ENCODE measurements at regions of chr16 and their contacts with region 1.

Region 1: GRCh38 chr16:3059000-3059722 is 6.3 kb upstream of the IL32 start:
- DNase-seq: peak; percentile 76 to 90 (median 85)
- H3K4me3 ChIP-seq: peak overlapping the region; percentile 23 to 89
- H3K4me3 Mint-ChIP-seq: peak overlapping the region; percentile 90 to 95 (median 94)
- H3K27ac ChIP-seq: peak overlapping the region; percentile 89
- H3K27ac Mint-ChIP-seq: peak overlapping the region; percentile 89 to 95 (median 92)
- H3K4me1 ChIP-seq: peaks cover 79% of the 10 kb centered on the region
- H3K4me1 Mint-ChIP-seq: peaks cover 36 to 74% (median 58%) of the 10 kb centered on the region in 4 donors
- H3K27me3 ChIP-seq: no peaks in the 10 kb centered on the region
- H3K27me3 Mint-ChIP-seq: no peaks in the 10 kb centered on the region

Region 2: DNA sequence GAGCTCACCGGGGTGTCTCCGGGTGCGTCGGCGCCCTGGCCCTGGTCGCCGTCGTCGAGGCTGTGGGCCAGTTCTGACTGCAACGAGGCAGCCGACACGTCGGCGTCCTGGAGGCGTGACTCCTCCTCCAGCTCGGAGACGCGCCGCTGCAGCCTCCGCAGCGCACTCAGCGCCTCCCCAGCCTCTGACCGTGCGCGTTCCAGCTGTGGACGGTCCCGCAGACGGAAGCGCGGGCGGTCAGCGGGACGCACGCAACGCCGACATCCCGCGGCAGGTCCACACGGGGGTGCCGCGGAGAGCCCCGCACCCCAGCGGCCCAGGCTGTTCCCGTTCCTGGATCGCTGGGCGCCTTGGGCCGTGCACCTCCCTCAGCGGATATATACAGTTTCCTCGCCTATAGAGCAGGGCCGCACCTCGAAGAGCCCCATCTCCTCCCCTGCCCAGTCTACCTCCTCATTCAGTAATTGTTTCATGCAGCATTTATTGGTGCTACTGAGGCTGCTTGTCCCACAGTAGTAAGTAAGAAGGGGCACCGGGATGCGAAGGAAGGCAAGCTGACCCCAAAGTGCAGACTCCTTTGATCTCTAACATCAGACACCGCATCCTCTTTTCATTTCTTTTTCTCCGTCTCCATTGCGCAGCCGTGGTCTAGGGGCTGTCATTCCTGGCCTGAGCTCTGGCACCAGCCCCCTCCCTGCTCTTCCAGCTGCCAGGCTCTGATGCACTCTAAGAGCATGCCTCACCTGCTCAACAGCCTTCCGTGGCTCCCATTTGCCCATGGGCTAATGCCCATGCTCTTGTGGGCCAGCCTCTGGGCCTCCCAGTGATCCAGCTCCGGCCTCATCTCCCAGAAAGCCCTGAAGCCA is 29.4 kb before region 1 on chr16:
- CTCF ChIA-PET with region 1: interaction called, 44 read pairs
- POLR2A ChIA-PET with region 1: interaction called, 37 read pairs
- intact Hi-C with region 1: loop called (anchors 1 kb)
- DNase-seq: peak in 3 of 5 donors; percentile 36 to 43 (median 37)
- H3K4me3 ChIP-seq: peak overlapping the region in 1 of 2 donors; percentile 41
- H3K4me3 Mint-ChIP-seq: peak overlapping the region; percentile 52 to 88 (median 74)
- H3K27ac ChIP-seq: no peak overlapping the region
- H3K27ac Mint-ChIP-seq: peak overlapping the region in 1 of 7 donors; percentile 81
- H3K4me1 ChIP-seq: peaks cover 25% of the 10 kb centered on the region
- H3K4me1 Mint-ChIP-seq: peaks cover 11 to 32% (median 19%) of the 10 kb centered on the region in 4 donors
- H3K27me3 ChIP-seq: peaks cover 13% of the 10 kb centered on the region
- H3K27me3 Mint-ChIP-seq: peaks cover 22 to 25% of the 10 kb centered on the region in 2 donors

Region 3: GRCh38 chr16:3080024-3080423 is 20.9 kb after region 1 on chr16:
- CTCF ChIA-PET with region 1: interaction called, 57 read pairs
- POLR2A ChIA-PET with region 1: interaction called, 217 read pairs
- intact Hi-C with region 1: loop called (anchors 2 kb)
- DNase-seq: no peak
- H3K4me3 ChIP-seq: no peak overlapping the region
- H3K4me3 Mint-ChIP-seq: peak overlapping the region in 5 of 8 donors; percentile 2 to 49 (median 38)
- H3K27ac ChIP-seq: no peak overlapping the region
- H3K27ac Mint-ChIP-seq: peak overlapping the region; percentile 64 to 93 (median 91)
- H3K4me1 ChIP-seq: peaks cover 65% of the 10 kb centered on the region
- H3K4me1 Mint-ChIP-seq: peaks cover 49 to 94% (median 70%) of the 10 kb centered on the region in 4 donors
- H3K27me3 ChIP-seq: no peaks in the 10 kb centered on the region
- H3K27me3 Mint-ChIP-seq: no peaks in the 10 kb centered on the region

Region 4: GRCh38 chr16:3099732-3100499 is 40.8 kb after region 1 on chr16:
- CTCF ChIA-PET with region 1: interaction called, 249 read pairs
- POLR2A ChIA-PET with region 1: interaction called, 36 read pairs
- intact Hi-C with region 1: loop called (anchors 1 kb)
- DNase-seq: peak; percentile 80 to 89 (median 82)
- H3K4me3 ChIP-seq: peak overlapping the region; percentile 19 to 23
- H3K4me3 Mint-ChIP-seq: peak overlapping the region; percentile 77 to 90 (median 86)
- H3K27ac ChIP-seq: peak overlapping the region; percentile 33
- H3K27ac Mint-ChIP-seq: peak overlapping the region; percentile 82 to 97 (median 93)
- H3K4me1 ChIP-seq: peaks cover 58% of the 10 kb centered on the region
- H3K4me1 Mint-ChIP-seq: peaks cover 19 to 68% (median 44%) of the 10 kb centered on the region in 4 donors
- H3K27me3 ChIP-seq: no peaks in the 10 kb centered on the region
- H3K27me3 Mint-ChIP-seq: no peaks in the 10 kb centered on the region

Region 5: DNA sequence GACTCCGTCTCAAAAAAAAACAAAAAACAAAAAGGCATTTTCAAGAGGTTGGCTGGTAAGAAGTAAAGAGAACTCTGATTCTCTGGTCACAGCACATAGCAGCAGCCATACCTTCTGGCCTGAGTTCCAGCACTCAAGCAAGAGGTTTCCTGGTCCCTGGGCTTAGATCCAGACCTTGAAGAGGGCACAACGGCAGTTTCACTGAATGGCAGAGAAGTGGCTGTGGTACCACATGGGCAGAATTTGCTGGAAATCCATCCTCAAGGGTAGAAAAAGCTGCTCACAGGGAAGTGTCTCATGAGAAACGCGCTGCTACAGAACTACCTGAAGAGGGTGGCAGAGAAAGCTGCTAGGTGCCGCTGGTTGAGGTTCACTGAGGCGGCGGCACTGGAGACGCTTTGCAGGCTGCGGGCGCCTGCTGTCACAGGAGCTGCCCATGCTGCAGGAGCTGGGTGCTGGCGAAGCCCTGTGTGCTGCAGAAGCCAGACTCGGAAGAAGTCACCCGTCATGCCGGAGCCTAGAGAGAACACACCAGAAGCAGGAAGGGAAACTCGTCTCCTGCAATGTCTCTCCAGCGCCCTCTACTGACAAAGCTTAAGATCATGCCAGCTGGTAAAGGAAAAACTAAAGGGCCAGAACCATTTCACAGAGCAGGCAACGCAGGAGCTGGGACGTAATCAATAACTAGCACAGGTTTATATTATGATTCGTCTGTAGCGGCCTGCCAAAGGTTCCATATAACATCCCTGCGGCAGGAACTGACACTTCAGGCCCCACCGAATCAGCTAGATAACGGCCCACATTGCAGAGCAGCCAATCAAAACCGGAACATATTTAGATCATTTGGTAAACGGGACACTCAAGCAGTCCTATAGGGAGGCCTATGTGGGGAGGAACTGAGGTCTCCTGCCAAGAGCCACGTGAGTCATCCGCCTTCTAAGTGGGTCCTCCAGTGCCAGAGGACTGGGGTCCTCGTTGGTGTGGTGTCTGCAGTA is 70.3 kb after region 1 on chr16:
- CTCF ChIA-PET with region 1: interaction called, 362 read pairs
- POLR2A ChIA-PET with region 1: interaction called, 129 read pairs
- intact Hi-C with region 1: loop called (anchors 1 kb)
- DNase-seq: peak; percentile 89 to 92 (median 90)
- H3K4me3 ChIP-seq: peak overlapping the region; percentile 56 to 64
- H3K4me3 Mint-ChIP-seq: peak overlapping the region; percentile 88 to 95 (median 94)
- H3K27ac ChIP-seq: peak overlapping the region; percentile 46
- H3K27ac Mint-ChIP-seq: peak overlapping the region; percentile 83 to 96 (median 89)
- H3K4me1 ChIP-seq: peaks cover 52% of the 10 kb centered on the region
- H3K4me1 Mint-ChIP-seq: peaks cover 26 to 70% (median 42%) of the 10 kb centered on the region in 4 donors
- H3K27me3 ChIP-seq: no peaks in the 10 kb centered on the region
- H3K27me3 Mint-ChIP-seq: no peaks in the 10 kb centered on the region

Region 6: DNA sequence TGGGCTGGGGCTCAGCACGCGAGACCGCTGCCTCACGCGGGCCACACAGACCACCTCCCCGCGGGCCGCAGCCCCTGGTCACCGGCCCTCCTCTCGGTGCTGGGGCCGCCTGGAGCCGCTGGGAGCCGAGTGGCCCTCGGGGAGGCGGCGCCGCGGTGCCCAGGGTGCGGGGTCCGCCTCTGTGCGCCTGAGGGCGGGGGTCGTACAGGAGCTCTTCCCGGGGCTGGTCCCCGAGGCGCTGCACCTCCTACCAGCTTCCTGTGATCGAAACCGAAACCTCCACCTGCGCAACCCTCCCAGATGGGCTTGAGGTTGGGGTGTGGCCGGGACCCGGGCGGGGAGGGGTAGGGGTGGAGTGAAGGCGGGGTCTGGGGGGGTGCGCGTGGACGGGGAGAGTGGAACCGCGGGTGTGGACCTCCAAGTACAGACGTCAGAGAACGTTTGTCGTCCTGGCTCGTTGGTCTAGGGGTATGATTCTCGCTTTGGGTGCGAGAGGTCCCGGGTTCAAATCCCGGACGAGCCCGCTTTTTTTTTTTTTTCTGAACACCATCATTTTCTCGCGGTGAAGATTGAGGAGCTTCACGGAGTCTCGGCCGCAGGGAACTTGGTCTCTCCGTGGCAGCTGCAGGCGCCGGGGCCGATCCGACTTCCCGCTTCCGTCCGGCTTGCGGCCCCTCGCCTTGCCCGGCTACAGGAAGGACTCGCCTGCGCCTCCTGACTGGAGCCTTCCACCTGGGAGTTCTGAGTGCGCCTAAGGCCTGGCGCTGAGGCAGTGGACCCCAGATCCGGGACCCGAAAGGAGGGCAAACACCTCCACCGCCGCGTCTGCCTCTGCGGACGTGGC is 99.5 kb after region 1 on chr16:
- CTCF ChIA-PET with region 1: interaction called, 5 read pairs
- POLR2A ChIA-PET with region 1: interaction called, 18 read pairs
- intact Hi-C with region 1: no loop called
- DNase-seq: peak; percentile 92 to 98 (median 94)
- H3K4me3 ChIP-seq: peak overlapping the region; percentile 65 to 66
- H3K4me3 Mint-ChIP-seq: peak overlapping the region; percentile 83 to 96 (median 92)
- H3K27ac ChIP-seq: peak overlapping the region; percentile 62
- H3K27ac Mint-ChIP-seq: peak overlapping the region; percentile 92 to 100 (median 96)
- H3K4me1 ChIP-seq: peaks cover 25% of the 10 kb centered on the region
- H3K4me1 Mint-ChIP-seq: peaks cover 11 to 36% (median 25%) of the 10 kb centered on the region in 4 donors
- H3K27me3 ChIP-seq: no peaks in the 10 kb centered on the region
- H3K27me3 Mint-ChIP-seq: peaks cover 0 to 2% of the 10 kb centered on the region in 2 donors